HCT116 (cell line): ENCODE measurements at regions of chr13 and their contacts with region 1.

Region 1: GRCh38 chr13:23888658-23889614 is at the start of gene MIPEP:
- DNase-seq: peak; percentile 88
- ATAC-seq: peak; percentile 90
- H3K4me3 ChIP-seq: peak within 1 kb of the TSS; percentile 74 to 98
- H3K27ac ChIP-seq: peak within 1 kb of the TSS; percentile 76
- H3K4me1 ChIP-seq: peaks cover 13 to 15% of the 10 kb centered on the region in 2 experiments; a peak in 3 of 4 replicates
- H3K27me3 ChIP-seq: no peaks in the 10 kb centered on the region
- CTCF ChIP-seq: peak; percentile 58 to 70 (median 69)
- POLR2A ChIP-seq: peak; percentile 68
- RAD21 ChIP-seq: no peak
- total RNA-seq, gene MIPEP: 33.3 TPM

Region 2: GRCh38 chr13:23705583-23705982 is 183.4 kb before region 1 on chr13:
- CTCF ChIA-PET with region 1: no interaction called
- POLR2A ChIA-PET with region 1: no interaction called
- RAD21 ChIA-PET with region 1: no interaction called
- intact Hi-C with region 1: no loop called
- DNase-seq: no peak
- ATAC-seq: no peak
- H3K4me3 ChIP-seq: no peak overlapping the region
- H3K27ac ChIP-seq: no peak overlapping the region
- H3K4me1 ChIP-seq: no peaks in the 10 kb centered on the region
- H3K27me3 ChIP-seq: no peaks in the 10 kb centered on the region
- CTCF ChIP-seq: no peak
- POLR2A ChIP-seq: no peak
- RAD21 ChIP-seq: no peak

Region 3: DNA sequence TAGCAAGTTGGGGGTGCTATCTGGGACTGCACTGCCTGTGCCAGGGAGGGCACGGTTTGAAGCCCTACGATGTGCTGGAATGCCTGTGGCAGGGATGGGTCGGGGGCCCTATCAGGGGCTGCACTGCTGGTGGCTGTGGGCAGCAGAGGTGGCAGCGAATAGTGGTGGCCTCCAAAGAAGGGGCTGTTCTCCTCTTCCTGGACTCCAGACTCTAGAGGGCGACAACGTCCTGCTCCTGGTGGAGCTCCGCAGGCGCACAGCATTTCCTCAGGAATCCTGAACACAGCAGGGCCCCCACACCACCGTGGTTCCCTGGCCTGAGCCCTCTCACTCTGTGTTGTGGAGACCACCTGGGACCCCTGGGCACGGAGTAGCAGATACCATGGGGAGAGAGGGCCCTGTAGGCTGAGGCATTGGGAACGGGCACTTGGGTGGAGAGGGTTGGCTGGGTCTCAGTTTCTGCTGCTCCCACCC is 173.1 kb before region 1 on chr13:
- CTCF ChIA-PET with region 1: no interaction called
- POLR2A ChIA-PET with region 1: no interaction called
- RAD21 ChIA-PET with region 1: no interaction called
- intact Hi-C with region 1: loop called (anchors 5 kb)
- DNase-seq: peak; percentile 18
- ATAC-seq: peak; percentile 92
- H3K4me3 ChIP-seq: no peak overlapping the region
- H3K27ac ChIP-seq: no peak overlapping the region
- H3K4me1 ChIP-seq: no peaks in the 10 kb centered on the region
- H3K27me3 ChIP-seq: 0 out of 2 replicates have a peak, but pooled peaks cover 7% of the 10 kb centered on the region
- CTCF ChIP-seq: peak; percentile 16 to 61 (median 59); a peak in 4 of 6 replicates
- POLR2A ChIP-seq: no peak
- RAD21 ChIP-seq: peak; percentile 58